ENCODE measurements at regions of chr5 and their contacts with region 1.

Region 1: DNA sequence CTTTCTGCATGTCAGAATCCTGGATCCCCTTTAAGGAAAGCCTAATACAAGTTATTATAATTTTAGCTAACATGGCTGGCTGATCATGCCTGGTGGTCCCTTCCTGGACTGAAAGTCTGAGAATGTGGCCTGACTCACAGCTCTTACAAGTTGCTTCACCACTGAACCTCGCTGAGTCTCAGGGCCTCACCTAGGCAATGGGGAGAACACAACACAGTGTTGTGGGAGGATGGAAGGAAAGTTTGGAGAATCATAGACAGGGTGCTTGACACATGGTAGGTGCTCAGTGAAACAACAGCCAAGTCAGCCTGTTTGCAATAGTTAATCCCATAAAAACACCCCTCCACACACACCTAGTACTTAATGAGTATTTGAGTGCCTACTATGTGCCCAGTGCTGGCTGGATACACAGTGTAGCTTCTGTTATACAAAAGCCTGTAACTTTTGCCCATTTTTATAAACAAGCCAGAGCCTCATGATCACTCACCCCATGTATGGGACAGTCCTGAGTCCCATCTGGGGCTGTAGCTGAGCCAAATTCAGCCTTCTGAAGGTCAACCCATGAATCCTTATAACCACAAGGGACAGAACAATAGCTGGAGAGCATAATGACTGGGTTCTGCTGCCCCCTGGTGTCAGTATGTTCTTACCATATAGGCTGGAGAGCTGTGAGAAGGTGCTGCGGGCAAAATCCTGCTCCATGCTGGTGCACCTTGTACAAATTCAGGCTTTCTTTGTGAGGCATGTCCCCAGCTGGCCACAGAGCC is 3.9 kb downstream of the ACSL6 start:
- DNase-seq: peak; percentile 80
- ATAC-seq: peak; percentile 78
- H3K4me3 ChIP-seq: no peak overlapping the region
- H3K27ac ChIP-seq: no peak overlapping the region
- H3K4me1 ChIP-seq: no peaks in the 10 kb centered on the region
- H3K27me3 ChIP-seq: no peaks in the 10 kb centered on the region
- CTCF ChIP-seq: peak; percentile 79

Region 2: GRCh38 chr5:131589510-131590348 is 417.9 kb before region 1 on chr5:
- CTCF ChIA-PET with region 1: interaction called, 5 read pairs
- POLR2A ChIA-PET with region 1: no interaction called
- intact Hi-C with region 1: loop called (anchors 1 kb)
- DNase-seq: peak; percentile 41
- ATAC-seq: peak; percentile 51
- H3K4me3 ChIP-seq: no peak overlapping the region
- H3K27ac ChIP-seq: no peak overlapping the region
- H3K4me1 ChIP-seq: peaks cover 8% of the 10 kb centered on the region
- H3K27me3 ChIP-seq: no peaks in the 10 kb centered on the region
- CTCF ChIP-seq: peak; percentile 78

Region 3: DNA sequence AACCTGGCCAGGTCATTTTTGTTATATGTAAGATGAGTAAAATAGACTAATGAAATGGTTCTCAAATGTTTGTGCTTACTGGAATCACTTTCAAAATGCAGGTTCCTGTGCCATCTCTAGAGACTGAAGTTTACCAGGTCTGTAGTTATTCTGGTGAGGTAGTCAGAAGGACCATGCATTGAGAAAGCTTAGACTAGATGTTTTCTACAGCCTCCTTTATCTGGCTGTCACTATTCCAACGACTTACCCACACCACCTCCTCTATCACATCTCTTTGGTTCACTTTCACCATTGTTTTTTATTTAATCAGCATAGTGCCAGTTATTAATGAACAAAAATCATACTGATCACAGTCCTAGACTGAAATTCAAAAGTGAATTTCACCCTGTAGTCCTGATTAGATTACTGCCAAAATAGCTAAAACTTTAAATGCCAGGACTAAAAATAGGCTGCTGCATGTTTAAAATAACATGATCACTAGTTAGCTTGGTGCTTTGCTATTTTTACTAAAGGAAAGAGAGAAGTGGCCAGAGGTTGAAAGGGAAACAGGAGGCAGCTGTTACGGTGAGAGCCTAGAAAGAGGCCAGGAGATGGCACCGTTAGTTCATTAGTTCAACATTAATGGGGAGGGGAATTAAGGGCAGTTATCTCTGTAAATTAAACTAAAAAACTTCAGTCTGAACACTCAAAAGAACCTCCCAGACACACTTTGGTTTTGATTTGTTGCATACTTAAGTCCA is 196.9 kb before region 1 on chr5:
- CTCF ChIA-PET with region 1: interaction called, 13 read pairs
- POLR2A ChIA-PET with region 1: no interaction called
- intact Hi-C with region 1: loop called (anchors 1 kb)
- DNase-seq: peak; percentile 27
- ATAC-seq: 0 out of 2 replicates have a peak, but pooled peaks have one; percentile 54
- H3K4me3 ChIP-seq: no peak overlapping the region
- H3K27ac ChIP-seq: no peak overlapping the region
- H3K4me1 ChIP-seq: no peaks in the 10 kb centered on the region
- H3K27me3 ChIP-seq: no peaks in the 10 kb centered on the region
- CTCF ChIP-seq: peak; percentile 46; the same call in 1 of the 2 replicates

Region 4: DNA sequence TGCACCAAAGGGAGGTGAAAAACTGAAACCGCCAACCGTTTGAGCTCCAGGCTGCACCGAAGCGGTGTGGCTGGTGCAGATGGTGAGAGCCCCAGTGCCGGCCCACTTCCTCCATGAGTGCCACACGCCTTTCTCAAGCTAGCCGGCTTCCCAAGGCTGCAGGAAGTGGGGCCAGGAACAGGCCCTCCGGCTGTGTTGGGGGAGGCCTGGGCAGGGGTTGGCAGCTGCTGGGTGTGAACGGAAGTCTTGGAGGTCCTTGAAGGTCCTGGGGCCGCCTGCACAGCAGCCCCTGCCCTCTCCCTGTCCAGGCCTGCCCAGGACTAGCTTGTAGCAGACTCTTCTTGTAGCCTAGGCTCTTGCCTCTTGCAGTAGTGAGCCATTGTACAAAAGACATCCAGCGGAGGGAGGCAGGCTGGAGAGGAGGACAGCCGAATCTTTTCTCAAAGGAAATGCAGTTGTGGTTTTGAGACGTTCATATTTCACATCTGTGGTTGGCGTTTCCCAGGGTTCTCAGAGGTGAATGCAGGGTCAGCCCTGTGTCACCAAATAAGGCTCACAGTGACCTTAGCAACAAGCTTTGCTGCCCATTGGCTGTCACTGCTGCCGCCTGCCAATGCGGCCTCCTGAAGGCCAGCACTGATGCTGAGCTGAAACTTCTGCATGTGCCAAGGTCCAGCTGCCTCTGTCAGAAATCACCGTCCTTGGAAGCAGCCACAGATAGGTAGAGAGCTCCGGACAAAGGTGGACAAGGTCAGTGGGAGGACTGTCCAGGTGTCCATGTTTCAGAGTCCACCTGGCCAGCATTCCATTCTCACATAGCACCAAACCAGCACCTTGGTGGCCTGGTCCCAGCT is 459.1 kb after region 1 on chr5:
- CTCF ChIA-PET with region 1: no interaction called
- POLR2A ChIA-PET with region 1: no interaction called
- intact Hi-C with region 1: loop called (anchors 10 kb)
- DNase-seq: no peak
- ATAC-seq: no peak
- H3K4me3 ChIP-seq: no peak overlapping the region
- H3K27ac ChIP-seq: no peak overlapping the region
- H3K4me1 ChIP-seq: no peaks in the 10 kb centered on the region; the same call in 1 of the 2 replicates
- H3K27me3 ChIP-seq: no peaks in the 10 kb centered on the region
- CTCF ChIP-seq: no peak

Measured in PC-3 (cell line).